ENCODE measurements at regions of chrX and their contacts with region 1.

Region 1: GRCh38 chrX:120250522-120251271 is at the start of gene ZBTB33:
- DNase-seq: peak; percentile 62 to 94 (median 87)

Region 2: DNA sequence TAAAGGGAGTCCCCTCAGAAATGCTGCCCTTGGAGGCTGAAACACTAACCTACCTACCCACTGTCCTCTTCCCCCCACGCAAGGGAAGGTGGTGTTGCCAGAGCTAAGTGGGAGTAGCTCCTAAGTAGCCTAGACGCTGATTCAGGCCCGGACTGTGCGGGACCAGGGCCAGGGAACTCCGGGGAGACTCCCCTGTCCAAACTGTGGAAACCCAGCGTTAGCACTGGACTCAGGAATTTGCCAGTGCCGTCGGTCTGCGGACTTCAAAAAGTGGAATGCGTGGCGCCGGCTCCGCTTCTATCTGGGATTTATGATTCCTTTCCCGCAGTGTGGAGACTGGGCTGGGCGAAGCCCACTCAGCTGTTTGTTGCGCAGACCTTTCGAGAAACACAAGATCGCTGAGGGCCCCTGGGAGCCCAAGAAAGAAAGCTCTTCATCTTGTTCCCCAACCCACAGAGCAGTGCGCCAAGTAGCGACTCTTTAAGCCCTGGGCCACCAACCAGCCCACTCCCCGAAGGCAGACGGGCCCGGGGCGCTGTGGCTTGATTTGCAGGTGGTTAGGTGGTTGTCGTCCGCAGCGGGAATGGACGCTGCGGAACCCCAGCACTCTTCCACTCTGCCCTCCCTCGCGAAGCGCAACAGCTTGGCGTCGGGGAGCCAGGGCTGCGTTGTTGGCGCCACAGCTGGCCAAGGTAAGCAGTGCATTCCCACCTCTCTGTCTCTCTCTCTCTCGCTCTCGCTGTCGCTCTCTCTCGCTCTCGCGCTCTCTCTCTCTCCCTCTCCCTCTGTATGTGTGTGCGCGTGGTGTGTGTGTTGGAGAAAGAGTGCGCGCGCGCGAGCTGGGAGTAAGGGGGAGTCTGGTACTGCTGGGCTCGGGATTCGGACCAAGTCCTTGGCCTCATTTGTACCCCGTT is 58.5 kb after region 1 on chrX:
- intact Hi-C with region 1: loop called (anchors 5 kb)
- DNase-seq: peak in 41 of 42 donors; percentile 40 to 78 (median 59)

Region 3: DNA sequence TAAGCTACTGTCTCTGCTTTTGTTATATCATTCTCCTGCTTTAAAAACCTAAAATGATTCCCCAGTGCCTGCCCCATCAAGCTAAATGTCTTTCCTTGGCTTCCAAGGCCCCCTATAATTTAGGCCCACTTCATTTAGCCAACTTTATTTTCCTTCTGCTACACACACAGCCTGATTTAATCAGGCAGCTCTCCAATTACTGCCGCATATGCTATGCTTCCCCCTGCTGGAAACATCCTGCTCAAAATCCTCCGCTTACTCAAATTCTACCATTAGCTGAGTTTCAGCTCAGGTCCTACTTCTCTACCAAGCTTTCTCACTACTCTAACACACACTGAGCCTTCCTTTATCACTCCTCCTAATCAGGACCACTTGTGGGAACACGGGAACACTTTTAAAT is 201.4 kb after region 1 on chrX:
- intact Hi-C with region 1: loop called (anchors 5 kb)
- DNase-seq: peak in 26 of 42 donors; percentile 8 to 68 (median 38)

Region 4: GRCh38 chrX:120468825-120469525 is 218.3 kb after region 1 on chrX and contains the start of gene LAMP2:
- intact Hi-C with region 1: loop called (anchors 5 kb)
- DNase-seq: peak; percentile 81 to 96 (median 92)

Region 5: DNA sequence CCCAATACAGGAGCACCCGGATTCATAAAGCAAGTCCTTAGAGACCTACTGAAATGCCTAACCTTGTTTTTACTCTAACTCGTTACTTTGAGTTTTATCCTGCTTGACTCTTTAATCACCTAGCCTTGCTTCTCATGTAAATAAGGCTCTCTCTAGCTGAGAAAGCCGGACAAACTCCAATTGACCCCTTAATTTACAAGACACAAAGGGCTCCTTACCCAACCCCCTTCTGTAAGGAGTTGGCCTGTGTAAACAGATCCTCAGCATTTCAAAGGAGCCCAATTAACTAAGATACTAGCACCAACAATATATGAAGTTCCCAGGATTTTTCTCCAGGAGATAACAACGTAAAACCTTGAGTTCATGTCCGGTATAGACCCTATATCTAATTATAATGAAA is 563.3 kb after region 1 on chrX:
- intact Hi-C with region 1: no loop called
- DNase-seq: no peak

Measured in head of caudate nucleus (tissue), 42 donors.